Activated naive CD4-positive, alpha-beta T cell treated with anti-CD3 and anti-CD28 coated beads for 36 hours (primary cell): ENCODE measurements at regions of chr10 and their contacts with region 1.

Region 1: GRCh38 chr10:3785257-3785850 is 345 bp upstream of the KLF6 start:
- DNase-seq: peak; percentile 99
- H3K4me3 Mint-ChIP-seq: peak overlapping the region; percentile 96
- H3K27ac Mint-ChIP-seq: peak overlapping the region; percentile 99
- H3K4me1 Mint-ChIP-seq: peaks cover 30% of the 10 kb centered on the region
- H3K27me3 Mint-ChIP-seq: no peaks in the 10 kb centered on the region

Region 2: DNA sequence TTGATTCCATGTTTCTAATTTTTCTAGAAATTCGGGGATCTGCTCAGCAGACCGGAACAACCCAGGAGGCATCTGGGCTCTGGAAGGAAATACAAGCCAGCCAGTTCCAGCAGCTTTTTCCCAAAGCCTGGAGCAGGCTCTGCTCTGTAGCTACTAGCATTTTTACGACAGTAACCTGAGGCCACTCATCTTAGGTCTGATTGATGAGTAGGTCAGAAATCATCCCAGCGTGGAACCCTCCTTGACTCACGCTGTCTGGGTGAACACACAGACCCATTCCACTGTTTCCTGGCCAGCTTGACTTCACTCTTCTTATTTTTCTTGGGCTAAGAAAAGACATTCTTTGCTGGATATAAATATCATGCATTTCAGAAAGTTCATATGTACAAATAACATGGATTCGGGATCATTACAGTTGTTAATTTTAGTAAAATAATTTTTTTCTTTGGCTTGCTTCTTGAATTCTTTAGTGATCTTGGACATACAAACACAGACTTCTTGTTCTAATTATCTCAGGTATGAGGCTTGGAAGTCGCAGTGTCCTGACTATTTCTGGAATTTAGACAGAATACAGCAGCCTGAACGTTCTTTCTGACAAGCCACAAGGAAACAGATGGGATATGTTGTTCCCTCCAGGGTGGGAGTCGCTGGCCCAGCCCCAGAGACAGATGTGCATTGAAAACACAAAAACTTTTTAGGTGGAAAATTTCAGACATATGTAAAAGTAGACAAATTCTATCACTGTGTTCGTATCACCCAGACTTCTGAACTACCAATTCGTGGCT is 558.2 kb before region 1 on chr10:
- CTCF ChIA-PET with region 1: no interaction called
- intact Hi-C with region 1: loop called (anchors 5 kb)
- DNase-seq: no peak
- H3K4me3 Mint-ChIP-seq: no peak overlapping the region
- H3K27ac Mint-ChIP-seq: no peak overlapping the region
- H3K4me1 Mint-ChIP-seq: peaks cover 22% of the 10 kb centered on the region
- H3K27me3 Mint-ChIP-seq: peaks cover 2% of the 10 kb centered on the region

Region 3: GRCh38 chr10:3668276-3668965 is 116.9 kb before region 1 on chr10:
- CTCF ChIA-PET with region 1: no interaction called
- intact Hi-C with region 1: loop called (anchors 2 kb)
- DNase-seq: peak; percentile 75
- H3K4me3 Mint-ChIP-seq: peak overlapping the region; percentile 74
- H3K27ac Mint-ChIP-seq: peak overlapping the region; percentile 84
- H3K4me1 Mint-ChIP-seq: peaks cover 37% of the 10 kb centered on the region
- H3K27me3 Mint-ChIP-seq: no peaks in the 10 kb centered on the region

Region 4: GRCh38 chr10:3811291-3811870 is 26.0 kb after region 1 on chr10:
- CTCF ChIA-PET with region 1: interaction called, 3 read pairs
- intact Hi-C with region 1: loop called (anchors 1 kb)
- DNase-seq: peak; percentile 82
- H3K4me3 Mint-ChIP-seq: peak overlapping the region; percentile 52
- H3K27ac Mint-ChIP-seq: peak overlapping the region; percentile 96
- H3K4me1 Mint-ChIP-seq: peaks cover 76% of the 10 kb centered on the region
- H3K27me3 Mint-ChIP-seq: no peaks in the 10 kb centered on the region

Region 5: GRCh38 chr10:3822541-3823330 is 37.4 kb after region 1 on chr10:
- CTCF ChIA-PET with region 1: no interaction called
- intact Hi-C with region 1: no loop called
- DNase-seq: no peak
- H3K4me3 Mint-ChIP-seq: no peak overlapping the region
- H3K27ac Mint-ChIP-seq: no peak overlapping the region
- H3K4me1 Mint-ChIP-seq: peaks cover 4% of the 10 kb centered on the region
- H3K27me3 Mint-ChIP-seq: no peaks in the 10 kb centered on the region

Region 6: GRCh38 chr10:3867454-3868270 is 82.3 kb after region 1 on chr10:
- CTCF ChIA-PET with region 1: interaction called, 3 read pairs
- intact Hi-C with region 1: loop called (anchors 2 kb)
- DNase-seq: peak; percentile 46
- H3K4me3 Mint-ChIP-seq: no peak overlapping the region
- H3K27ac Mint-ChIP-seq: peak overlapping the region; percentile 70
- H3K4me1 Mint-ChIP-seq: peaks cover 53% of the 10 kb centered on the region
- H3K27me3 Mint-ChIP-seq: no peaks in the 10 kb centered on the region